Heart right ventricle (tissue), 16 donors: ENCODE measurements at regions of chr10 and their contacts with region 1.

Region 1: DNA sequence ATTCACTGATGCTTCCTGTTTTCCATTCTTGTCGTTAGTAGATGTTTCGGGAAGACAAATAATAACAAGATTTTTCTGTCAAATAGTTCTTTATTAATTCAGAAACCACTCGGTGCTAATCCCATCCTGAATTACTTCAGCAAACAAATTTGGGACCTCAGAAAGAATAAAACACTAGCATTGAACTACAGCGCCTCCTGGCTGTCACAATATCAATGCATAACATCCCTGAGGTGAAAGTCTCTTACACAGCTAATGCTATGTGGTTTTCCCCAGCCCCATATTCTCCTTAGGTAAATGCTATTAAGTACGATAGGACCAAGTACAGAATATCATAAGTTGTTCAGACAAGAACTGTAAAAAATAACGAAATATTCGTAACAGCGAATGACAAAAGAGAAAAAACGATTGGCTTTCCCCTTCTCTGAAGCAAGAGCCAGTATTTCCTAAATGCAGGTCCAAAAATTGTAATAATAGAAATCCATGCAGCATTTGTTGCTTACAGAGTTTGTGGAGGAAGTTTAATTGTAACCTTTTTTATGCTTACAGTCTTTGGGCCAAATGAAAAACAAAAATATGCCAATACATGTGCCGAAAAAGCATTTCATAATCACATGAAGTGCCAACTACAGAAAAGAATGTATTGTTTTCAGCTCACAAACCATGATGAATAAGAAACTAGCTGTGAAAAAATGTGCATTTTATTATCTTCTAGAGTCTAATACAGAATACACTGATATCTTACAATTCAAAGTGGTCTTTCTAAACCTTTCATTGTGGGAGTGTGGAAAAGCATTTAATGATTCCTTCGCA is 47.3 kb downstream of the MYPN start:
- DNase-seq: peak in 1 of 2 donors; percentile 71
- ATAC-seq: peak in 6 of 8 donors; percentile 9 to 37 (median 28)
- H3K4me3 ChIP-seq: no peak overlapping the region
- H3K27ac ChIP-seq: peak overlapping the region in 8 of 10 donors; percentile 16 to 95 (median 85)
- H3K4me1 ChIP-seq: peaks cover 0 to 54% (median 19%) of the 10 kb centered on the region in 9 donors
- H3K27me3 ChIP-seq: no peaks in the 10 kb centered on the region
- CTCF ChIP-seq: peak; percentile 57 to 92 (median 87)

Region 2: DNA sequence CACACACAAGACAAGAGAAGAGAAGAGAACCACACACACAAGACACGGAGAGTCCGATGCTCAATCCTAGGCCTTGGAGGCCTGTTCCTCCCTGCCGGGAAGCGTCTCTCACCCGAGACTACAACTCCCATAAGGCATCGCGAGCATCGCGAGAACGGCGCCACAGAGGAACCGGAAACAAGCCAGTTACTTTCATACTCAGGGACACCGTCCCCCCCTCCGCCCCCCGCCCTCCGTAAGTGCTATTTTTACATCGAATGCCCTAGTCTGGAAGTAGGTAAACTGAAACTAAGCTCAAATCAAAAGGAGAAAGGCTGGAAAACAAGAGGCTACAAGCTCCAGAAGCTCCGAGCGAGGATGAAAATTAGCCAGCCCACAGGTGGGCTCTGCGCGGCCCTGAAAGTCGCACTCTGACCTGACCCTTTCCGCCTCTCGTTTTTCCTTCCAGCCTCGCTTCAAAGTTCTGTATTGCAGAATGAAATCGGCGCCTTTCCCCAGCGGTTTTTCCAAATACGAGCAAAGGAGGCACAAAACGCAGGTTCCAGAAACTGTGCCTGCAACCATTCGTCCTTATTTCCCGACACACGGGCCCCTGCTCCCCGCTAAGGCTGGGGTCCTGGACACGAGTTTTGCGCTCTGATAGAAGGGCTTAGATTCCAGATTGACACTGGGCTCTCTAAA is 307.1 kb before region 1 on chr10:
- intact Hi-C with region 1: loop called in 2 of 10 experiments (anchors 10 kb)
- DNase-seq: peak; percentile 98
- ATAC-seq: peak; percentile 94 to 100 (median 99)
- H3K4me3 ChIP-seq: peak overlapping the region; percentile 26 to 86 (median 70)
- H3K27ac ChIP-seq: peak overlapping the region; percentile 70 to 99 (median 93)
- H3K4me1 ChIP-seq: peaks cover 0 to 8% (median 6%) of the 10 kb centered on the region in 9 donors
- H3K27me3 ChIP-seq: no peaks in the 10 kb centered on the region
- CTCF ChIP-seq: peak in 1 of 9 donors; percentile 29

Region 3: DNA sequence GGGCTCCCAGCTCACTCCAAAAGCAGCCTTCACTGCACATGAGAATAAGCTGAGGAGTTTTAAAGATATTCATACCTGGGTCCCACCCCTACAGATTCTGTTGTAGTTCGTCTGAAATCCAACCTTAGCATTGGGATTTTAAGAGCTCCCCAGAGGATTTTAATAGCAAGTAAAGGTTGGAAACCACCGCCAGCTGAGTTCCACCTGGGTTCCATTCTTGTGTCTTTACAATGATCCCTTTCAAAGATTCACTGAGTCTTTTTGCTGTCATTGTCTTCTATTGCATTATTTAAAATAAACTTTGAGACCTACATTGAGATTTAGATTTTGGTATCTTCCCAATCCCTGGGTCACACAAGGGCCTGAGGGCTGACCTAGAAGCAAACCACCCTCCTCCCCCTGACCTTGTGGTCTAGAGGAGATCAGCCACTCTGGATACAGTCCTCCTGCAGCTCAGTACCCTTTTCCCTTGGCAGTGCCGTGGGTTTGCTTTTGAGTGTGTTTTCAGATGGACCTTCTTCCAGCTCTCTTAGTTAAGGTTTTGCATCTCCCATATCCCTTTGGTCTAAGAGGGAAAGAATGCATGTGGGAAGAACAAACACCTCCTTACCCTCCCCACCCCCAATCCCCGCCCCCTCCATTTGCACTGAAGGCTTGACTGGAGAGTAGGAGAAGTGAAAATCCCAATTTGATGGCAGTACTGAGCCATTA is 294.7 kb before region 1 on chr10:
- intact Hi-C with region 1: loop called in 7 of 10 experiments (anchors 2 to 10 kb)
- DNase-seq: no peak
- ATAC-seq: no peak
- H3K4me3 ChIP-seq: no peak overlapping the region
- H3K27ac ChIP-seq: no peak overlapping the region
- H3K4me1 ChIP-seq: peaks cover 0 to 4% (median 0%) of the 10 kb centered on the region in 9 donors
- H3K27me3 ChIP-seq: no peaks in the 10 kb centered on the region
- CTCF ChIP-seq: no peak

Region 4: DNA sequence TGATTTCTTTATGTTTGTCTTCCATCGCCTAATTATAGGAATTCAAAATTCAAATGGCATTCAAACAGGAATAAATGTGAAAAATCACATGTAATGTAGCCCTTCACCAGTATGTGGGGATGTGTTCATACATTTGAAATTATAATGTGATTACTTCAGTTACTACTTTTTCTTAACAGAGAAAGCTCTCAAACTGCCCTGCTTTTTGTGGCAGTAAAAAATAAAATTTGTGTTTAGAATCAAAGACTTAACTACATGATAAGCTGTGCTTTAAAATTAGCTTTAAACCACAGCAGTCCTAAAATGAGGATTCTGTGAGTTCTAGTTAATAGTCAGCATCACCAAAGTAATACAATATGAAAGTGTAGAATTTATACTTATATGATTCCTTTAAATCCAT is 73.7 kb before region 1 on chr10:
- intact Hi-C with region 1: loop called (anchors 1 to 10 kb)
- DNase-seq: no peak
- ATAC-seq: peak in 2 of 8 donors; percentile 32 to 39
- H3K4me3 ChIP-seq: no peak overlapping the region
- H3K27ac ChIP-seq: peak overlapping the region in 3 of 10 donors; percentile 5 to 50 (median 42)
- H3K4me1 ChIP-seq: peaks cover 0 to 27% (median 0%) of the 10 kb centered on the region in 9 donors
- H3K27me3 ChIP-seq: no peaks in the 10 kb centered on the region
- CTCF ChIP-seq: peak in 8 of 9 donors; percentile 10 to 61 (median 46)

Region 5: GRCh38 chr10:68088744-68089143 is 67.8 kb before region 1 on chr10:
- intact Hi-C with region 1: loop called (anchors 1 to 10 kb)
- DNase-seq: no peak
- ATAC-seq: peak in 2 of 8 donors; percentile 6 to 12
- H3K4me3 ChIP-seq: peak overlapping the region in 6 of 10 donors; percentile 5 to 56 (median 50)
- H3K27ac ChIP-seq: peak overlapping the region in 7 of 10 donors; percentile 5 to 89 (median 79)
- H3K4me1 ChIP-seq: peaks cover 0 to 17% (median 4%) of the 10 kb centered on the region in 9 donors
- H3K27me3 ChIP-seq: no peaks in the 10 kb centered on the region
- CTCF ChIP-seq: no peak